Activated CD4-positive, alpha-beta T cell treated with anti-CD3 and anti-CD28 coated beads for 36 hours (primary cell): ENCODE measurements at regions of chr3 and their contacts with region 1.

Region 1: GRCh38 chr3:147384210-147385058 is 21.9 kb downstream of the ZIC4 start:
- DNase-seq: no peak
- ATAC-seq: peak; percentile 58
- H3K4me3 Mint-ChIP-seq: no peak overlapping the region
- H3K27ac Mint-ChIP-seq: no peak overlapping the region
- H3K4me1 Mint-ChIP-seq: no peaks in the 10 kb centered on the region
- H3K27me3 Mint-ChIP-seq: peaks cover 83% of the 10 kb centered on the region

Region 2: DNA sequence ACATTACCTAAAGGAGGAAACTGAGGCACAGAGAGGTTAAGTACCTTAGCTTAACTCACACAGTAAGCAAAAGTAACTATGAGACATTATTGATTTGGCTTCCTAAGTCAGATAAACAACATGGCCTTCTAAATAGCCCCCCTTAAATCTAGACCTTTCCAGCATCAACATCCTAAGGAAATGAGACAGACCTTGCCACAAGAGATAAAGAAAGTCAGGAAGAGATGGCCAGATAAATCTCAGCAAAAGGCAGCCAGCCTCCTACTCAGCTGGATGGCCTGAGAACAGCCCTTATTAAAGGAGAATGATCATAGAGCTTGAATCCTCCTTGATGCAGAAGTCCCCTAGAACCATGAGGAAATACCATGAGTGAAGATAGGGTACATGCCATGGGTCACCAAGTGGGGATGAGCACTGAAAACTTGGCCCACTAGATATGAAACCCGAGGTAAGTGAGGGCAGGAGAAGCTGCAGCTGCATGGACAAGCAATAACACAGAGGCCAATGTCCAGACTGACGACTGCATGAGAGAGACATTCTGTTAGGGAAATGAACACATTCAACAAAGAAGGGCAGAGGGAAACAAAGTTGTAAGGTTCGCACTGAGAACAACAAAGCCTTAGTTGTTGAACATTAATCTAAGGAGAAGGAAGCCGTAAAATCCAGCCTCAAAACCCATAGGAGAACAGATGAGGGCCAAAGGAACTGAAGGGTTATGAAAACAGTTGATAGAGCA is 47.7 kb before region 1 on chr3:
- CTCF ChIA-PET with region 1: no interaction called
- POLR2A ChIA-PET with region 1: no interaction called
- intact Hi-C with region 1: no loop called
- DNase-seq: no peak
- ATAC-seq: no peak
- H3K4me3 Mint-ChIP-seq: no peak overlapping the region
- H3K27ac Mint-ChIP-seq: no peak overlapping the region
- H3K4me1 Mint-ChIP-seq: no peaks in the 10 kb centered on the region
- H3K27me3 Mint-ChIP-seq: no peaks in the 10 kb centered on the region

Region 3: GRCh38 chr3:147354623-147355022 is 29.8 kb before region 1 on chr3:
- CTCF ChIA-PET with region 1: no interaction called
- POLR2A ChIA-PET with region 1: interaction called, 3 read pairs
- intact Hi-C with region 1: loop called in 1 of 2 experiments (anchors 5 kb)
- DNase-seq: no peak
- ATAC-seq: no peak
- H3K4me3 Mint-ChIP-seq: no peak overlapping the region
- H3K27ac Mint-ChIP-seq: no peak overlapping the region
- H3K4me1 Mint-ChIP-seq: no peaks in the 10 kb centered on the region
- H3K27me3 Mint-ChIP-seq: peaks cover 58% of the 10 kb centered on the region